Right lobe of liver (tissue), 6 donors: ENCODE measurements at regions of chr12 and their contacts with region 1.

Region 1: GRCh38 chr12:51814311-51815088 is 34.0 kb downstream of the FIGNL2 start:
- DNase-seq: peak; percentile 88 to 92 (median 88)
- ATAC-seq: peak; percentile 88 to 95 (median 92)
- H3K4me3 ChIP-seq: peak overlapping the region; percentile 57 to 77 (median 71)
- H3K27ac ChIP-seq: peak overlapping the region; percentile 67 to 94 (median 92)
- H3K4me1 ChIP-seq: peaks cover 0 to 6% (median 0%) of the 10 kb centered on the region in 4 donors
- H3K27me3 ChIP-seq: no peaks in the 10 kb centered on the region
- CTCF ChIP-seq: peak; percentile 52 to 97 (median 75)
- POLR2A ChIP-seq: peak; percentile 91

Region 2: GRCh38 chr12:51430231-51430906 is 384.1 kb before region 1 on chr12:
- intact Hi-C with region 1: no loop called
- DNase-seq: no peak
- ATAC-seq: peak in 2 of 4 donors; percentile 63 to 75
- H3K4me3 ChIP-seq: no peak overlapping the region
- H3K27ac ChIP-seq: no peak overlapping the region
- H3K4me1 ChIP-seq: peaks cover 0 to 13% (median 0%) of the 10 kb centered on the region in 4 donors
- H3K27me3 ChIP-seq: no peaks in the 10 kb centered on the region
- CTCF ChIP-seq: no peak
- POLR2A ChIP-seq: no peak

Region 3: GRCh38 chr12:51521554-51522276 is 292.8 kb before region 1 on chr12:
- intact Hi-C with region 1: loop called in 1 of 2 experiments (anchors 10 kb)
- DNase-seq: no peak
- ATAC-seq: peak; percentile 32 to 57 (median 54)
- H3K4me3 ChIP-seq: no peak overlapping the region
- H3K27ac ChIP-seq: no peak overlapping the region
- H3K4me1 ChIP-seq: no peaks in the 10 kb centered on the region
- H3K27me3 ChIP-seq: no peaks in the 10 kb centered on the region
- CTCF ChIP-seq: peak; percentile 15 to 36 (median 18)
- POLR2A ChIP-seq: no peak

Region 4: GRCh38 chr12:51886021-51886322 is 71.5 kb after region 1 on chr12:
- intact Hi-C with region 1: no loop called
- DNase-seq: peak; percentile 67 to 72 (median 68)
- ATAC-seq: peak; percentile 76 to 88 (median 84)
- H3K4me3 ChIP-seq: no peak overlapping the region
- H3K27ac ChIP-seq: peak overlapping the region; percentile 17 to 64 (median 21)
- H3K4me1 ChIP-seq: peaks cover 0 to 3% (median 0%) of the 10 kb centered on the region in 4 donors
- H3K27me3 ChIP-seq: no peaks in the 10 kb centered on the region
- CTCF ChIP-seq: no peak
- POLR2A ChIP-seq: no peak

Region 5: DNA sequence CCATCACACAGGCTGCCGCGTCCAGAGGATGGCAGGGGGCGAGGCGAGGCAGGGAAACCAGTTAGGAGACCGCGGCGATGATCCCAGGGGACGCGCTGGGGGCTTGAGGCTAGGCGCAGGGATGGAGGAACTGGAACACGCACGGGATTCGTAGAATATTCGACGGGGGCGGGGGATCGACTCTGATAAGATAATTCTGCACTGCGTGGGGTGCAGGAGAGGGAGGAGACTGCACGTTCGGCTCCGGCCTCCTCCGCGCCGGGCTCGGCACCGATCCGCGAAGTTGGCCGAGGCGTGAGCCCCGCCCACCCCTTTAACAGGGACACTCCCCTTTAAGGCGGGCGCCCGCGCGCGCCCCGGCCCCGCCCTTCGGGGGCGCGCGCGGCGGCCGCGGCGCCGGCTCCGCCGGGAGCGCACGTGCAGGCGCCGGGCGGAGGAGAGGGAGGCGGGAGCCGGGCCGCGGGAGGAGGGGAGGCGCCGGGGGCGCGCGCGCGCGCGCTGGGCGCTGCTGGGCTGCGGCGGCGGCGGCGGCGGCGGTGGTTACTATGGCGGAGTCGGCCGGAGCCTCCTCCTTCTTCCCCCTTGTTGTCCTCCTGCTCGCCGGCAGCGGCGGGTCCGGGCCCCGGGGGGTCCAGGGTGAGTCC is 136.8 kb after region 1 on chr12 and contains the start of gene ACVR1B:
- intact Hi-C with region 1: no loop called
- DNase-seq: peak; percentile 95 to 96 (median 95)
- ATAC-seq: peak; percentile 88 to 96 (median 90)
- H3K4me3 ChIP-seq: peak within 1 kb of the TSS; percentile 93 to 95 (median 94)
- H3K27ac ChIP-seq: peak within 1 kb of the TSS; percentile 93 to 99 (median 95)
- H3K4me1 ChIP-seq: peaks cover 0 to 29% (median 8%) of the 10 kb centered on the region in 4 donors
- H3K27me3 ChIP-seq: no peaks in the 10 kb centered on the region
- CTCF ChIP-seq: no peak
- POLR2A ChIP-seq: peak; percentile 63
- total RNA-seq, gene ACVR1B: 14.1 to 28.0 (median 25.0) TPM